Sigmoid colon (tissue), 7 donors: ENCODE measurements at regions of chr14 and their contacts with region 1.

Region 1: DNA sequence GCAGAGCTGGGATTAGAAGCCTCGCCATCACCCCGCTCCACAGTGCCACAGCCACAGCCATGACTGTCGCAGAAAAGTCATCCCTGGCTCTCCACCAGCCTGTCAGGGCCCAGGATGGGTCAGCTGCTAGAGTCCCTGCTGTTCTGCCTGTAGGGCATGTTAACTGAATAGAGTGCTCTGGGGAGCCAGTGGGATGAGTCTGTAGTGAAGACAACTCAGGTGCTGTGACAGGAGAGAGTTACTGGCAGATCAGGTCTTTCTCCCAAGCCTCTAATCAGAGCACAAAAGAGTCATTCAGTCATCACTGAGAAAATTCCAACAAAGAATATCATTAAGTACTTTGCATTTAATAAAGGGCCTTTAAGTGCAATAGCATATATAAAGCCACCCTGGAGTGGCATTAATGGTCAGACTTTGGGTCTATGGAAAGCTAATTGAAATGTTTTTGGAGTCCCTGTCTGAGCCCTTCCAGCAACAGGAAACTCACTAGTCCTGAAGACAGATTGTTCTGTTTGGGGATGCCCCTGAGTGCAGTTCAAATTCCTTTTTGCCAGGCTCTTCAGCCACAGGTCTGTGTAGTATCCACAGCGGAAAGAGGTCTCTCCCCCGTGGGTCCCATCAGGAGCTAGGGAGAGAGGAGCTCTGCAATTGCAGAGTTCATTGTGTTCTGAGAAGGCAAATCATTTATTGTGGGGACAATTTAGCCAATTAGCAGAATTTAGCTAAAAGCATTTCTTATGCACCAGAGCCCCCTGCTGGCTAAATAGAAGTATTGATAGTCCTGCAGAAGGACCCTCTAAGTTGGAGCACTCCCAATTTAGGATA is 45.2 kb upstream of the C14orf132 start:
- DNase-seq: no peak
- H3K4me3 ChIP-seq: no peak overlapping the region
- H3K27ac ChIP-seq: no peak overlapping the region
- H3K4me1 ChIP-seq: no peaks in the 10 kb centered on the region
- H3K27me3 ChIP-seq: peaks cover 0 to 11% (median 5%) of the 10 kb centered on the region in 3 donors
- CTCF ChIP-seq: peak; percentile 37 to 86 (median 73)
- EP300 ChIP-seq: no peak
- POLR2A ChIP-seq: no peak

Region 2: GRCh38 chr14:95442633-95443021 is 551.4 kb before region 1 on chr14:
- intact Hi-C with region 1: loop called (anchors 10 kb)
- DNase-seq: peak; percentile 87
- H3K4me3 ChIP-seq: no peak overlapping the region
- H3K27ac ChIP-seq: no peak overlapping the region
- H3K4me1 ChIP-seq: no peaks in the 10 kb centered on the region
- H3K27me3 ChIP-seq: no peaks in the 10 kb centered on the region
- CTCF ChIP-seq: peak; percentile 58 to 84 (median 75)
- EP300 ChIP-seq: no peak
- POLR2A ChIP-seq: no peak

Region 3: GRCh38 chr14:95561001-95561412 is 433.0 kb before region 1 on chr14:
- intact Hi-C with region 1: loop called (anchors 1 kb)
- DNase-seq: peak; percentile 87
- H3K4me3 ChIP-seq: no peak overlapping the region
- H3K27ac ChIP-seq: no peak overlapping the region
- H3K4me1 ChIP-seq: no peaks in the 10 kb centered on the region
- H3K27me3 ChIP-seq: no peaks in the 10 kb centered on the region
- CTCF ChIP-seq: peak; percentile 83 to 97 (median 93)
- EP300 ChIP-seq: no peak
- POLR2A ChIP-seq: no peak

Region 4: GRCh38 chr14:96275177-96276112 is 281.5 kb after region 1 on chr14:
- intact Hi-C with region 1: loop called (anchors 2 kb)
- DNase-seq: peak; percentile 87
- H3K4me3 ChIP-seq: no peak overlapping the region
- H3K27ac ChIP-seq: peak overlapping the region; percentile 5 to 72 (median 51)
- H3K4me1 ChIP-seq: peaks cover 0 to 34% (median 17%) of the 10 kb centered on the region in 4 donors
- H3K27me3 ChIP-seq: no peaks in the 10 kb centered on the region
- CTCF ChIP-seq: peak; percentile 83 to 98 (median 92)
- EP300 ChIP-seq: no peak
- POLR2A ChIP-seq: no peak